Cardiac septum (tissue), 1 donor: ENCODE measurements at regions of chr1 and their contacts with region 1.

Region 1: GRCh38 chr1:111656086-111657017 is 36.8 kb downstream of the RAP1A start:
- DNase-seq: no peak

Region 2: DNA sequence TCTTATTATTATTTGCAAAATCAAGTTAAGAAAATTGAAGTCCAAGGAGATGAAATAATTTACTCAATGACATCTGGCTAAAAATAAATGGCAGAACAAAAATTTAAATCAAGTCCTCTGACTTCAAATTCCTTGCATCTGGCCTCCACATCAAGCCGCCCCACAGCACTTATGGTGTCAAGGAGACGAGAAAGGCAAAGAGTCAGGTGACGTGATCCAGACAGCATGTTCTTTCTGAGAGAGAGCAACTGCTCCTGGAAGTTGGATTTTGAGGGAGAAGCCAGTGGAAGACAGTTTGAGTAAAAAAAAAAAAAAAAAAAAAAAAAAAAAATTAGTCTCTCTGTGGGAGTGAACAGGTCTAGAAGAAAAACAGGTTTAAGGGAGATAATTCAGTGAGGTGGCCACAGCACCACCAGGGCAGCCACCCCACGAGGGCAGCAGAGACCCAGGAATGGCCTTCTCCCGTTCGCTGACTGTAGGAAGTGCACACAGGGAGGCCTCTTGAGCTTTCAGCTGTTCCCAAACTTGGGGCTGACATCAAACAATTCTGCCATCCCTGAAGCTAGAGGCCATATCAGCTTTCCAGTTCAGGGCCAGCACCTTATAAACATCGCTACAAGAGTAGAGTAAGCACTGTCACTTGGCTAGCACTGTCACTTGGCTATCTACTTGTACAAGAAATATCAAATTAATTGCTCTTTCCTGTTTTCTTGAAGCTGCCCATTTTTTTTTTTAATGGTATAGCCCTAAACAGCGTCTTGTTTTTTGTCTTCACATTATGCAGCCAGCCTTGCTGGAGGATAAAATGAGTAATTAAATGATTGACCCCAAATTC is 174.7 kb before region 1 on chr1:
- intact Hi-C with region 1: loop called (anchors 1 kb)
- DNase-seq: peak; percentile 93

Region 3: GRCh38 chr1:111592389-111593361 is 63.7 kb before region 1 on chr1:
- intact Hi-C with region 1: loop called (anchors 5 kb)
- DNase-seq: peak; percentile 91

Region 4: DNA sequence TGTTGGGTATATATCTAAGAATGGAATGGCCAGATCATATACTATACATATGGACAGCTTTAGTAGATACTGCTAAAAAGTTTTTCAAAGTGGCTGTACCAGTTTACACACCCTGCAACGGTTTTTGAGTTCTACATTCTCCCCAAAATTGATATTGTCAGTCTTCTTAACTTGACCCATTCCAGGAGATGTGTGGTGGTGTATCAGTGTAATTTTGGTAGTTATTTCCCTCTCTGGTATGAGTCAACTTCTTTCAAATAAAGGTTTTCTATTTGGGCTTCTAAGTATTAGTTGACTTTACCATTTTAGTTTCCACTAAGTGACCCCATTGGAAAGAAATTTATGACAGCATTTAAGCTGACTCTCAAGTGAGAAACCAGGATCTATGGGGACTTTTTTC is 53.6 kb after region 1 on chr1:
- intact Hi-C with region 1: no loop called
- DNase-seq: no peak

Region 5: GRCh38 chr1:112219267-112219666 is 562.9 kb after region 1 on chr1:
- intact Hi-C with region 1: no loop called
- DNase-seq: no peak